ENCODE measurements at regions of chr16 and their contacts with region 1.

Region 1: GRCh38 chr16:81817789-81818567 is 38.9 kb downstream of the PLCG2 start:
- DNase-seq: peak; percentile 60
- CTCF ChIP-seq: no peak

Region 2: GRCh38 chr16:81836279-81837054 is 18.5 kb after region 1 on chr16:
- CTCF ChIA-PET with region 1: interaction called, 12 read pairs
- POLR2A ChIA-PET with region 1: interaction called, 7 read pairs
- DNase-seq: peak; percentile 67
- CTCF ChIP-seq: no peak